Tibial artery (tissue), 4 donors: ENCODE measurements at regions of chr2 and their contacts with region 1.

Region 1: DNA sequence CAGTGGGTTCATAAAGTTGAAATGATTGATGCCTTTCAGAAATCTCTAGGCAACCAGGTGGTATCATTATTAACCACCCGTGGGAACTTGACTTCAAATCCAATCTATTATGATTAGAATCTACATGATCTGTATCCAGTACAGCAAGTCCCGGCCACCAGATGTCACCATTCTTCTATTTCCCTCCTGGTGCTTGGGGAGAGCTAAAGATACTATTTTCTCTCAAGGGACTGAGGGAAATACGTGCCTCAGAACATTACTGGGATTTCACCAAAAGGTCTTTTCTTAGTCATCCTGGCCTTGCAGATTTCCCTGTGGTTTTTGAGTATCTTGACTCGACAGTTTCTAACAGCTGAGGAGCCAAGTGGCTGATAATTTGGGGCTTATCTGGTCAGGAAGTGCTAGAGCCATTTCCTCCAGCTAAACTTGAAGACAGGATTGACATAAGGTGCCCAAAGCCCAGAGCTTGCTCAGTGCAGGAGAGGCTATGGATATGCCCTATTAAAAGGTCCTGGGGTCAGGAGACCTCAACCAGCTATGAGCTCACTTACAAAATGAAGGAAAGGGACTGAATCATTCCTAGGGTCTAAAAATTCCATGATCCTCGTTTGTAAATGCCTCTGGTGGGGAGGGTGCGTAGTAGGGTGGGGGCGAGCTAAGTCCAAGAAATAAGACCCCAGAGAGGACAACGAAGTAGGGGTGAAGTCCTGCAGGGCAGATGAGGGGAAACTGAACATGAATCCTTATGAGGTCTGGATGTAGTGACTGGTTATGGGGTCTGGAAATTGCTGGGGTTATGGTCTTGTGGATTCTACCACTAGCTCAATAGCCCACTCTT is 135.4 kb upstream of the MGAT5 start:
- DNase-seq: peak; percentile 91 to 96
- H3K4me3 ChIP-seq: no peak overlapping the region
- H3K27ac ChIP-seq: peak overlapping the region; percentile 93 to 95
- H3K4me1 ChIP-seq: peaks cover 0 to 34% (median 20%) of the 10 kb centered on the region in 4 donors
- H3K27me3 ChIP-seq: no peaks in the 10 kb centered on the region
- CTCF ChIP-seq: peak; percentile 77 to 92

Region 2: GRCh38 chr2:132776282-132776681 is 1342.2 kb before region 1 on chr2:
- intact Hi-C with region 1: no loop called
- DNase-seq: no peak
- H3K4me3 ChIP-seq: no peak overlapping the region
- H3K27ac ChIP-seq: no peak overlapping the region
- H3K4me1 ChIP-seq: no peaks in the 10 kb centered on the region
- H3K27me3 ChIP-seq: no peaks in the 10 kb centered on the region
- CTCF ChIP-seq: no peak

Region 3: DNA sequence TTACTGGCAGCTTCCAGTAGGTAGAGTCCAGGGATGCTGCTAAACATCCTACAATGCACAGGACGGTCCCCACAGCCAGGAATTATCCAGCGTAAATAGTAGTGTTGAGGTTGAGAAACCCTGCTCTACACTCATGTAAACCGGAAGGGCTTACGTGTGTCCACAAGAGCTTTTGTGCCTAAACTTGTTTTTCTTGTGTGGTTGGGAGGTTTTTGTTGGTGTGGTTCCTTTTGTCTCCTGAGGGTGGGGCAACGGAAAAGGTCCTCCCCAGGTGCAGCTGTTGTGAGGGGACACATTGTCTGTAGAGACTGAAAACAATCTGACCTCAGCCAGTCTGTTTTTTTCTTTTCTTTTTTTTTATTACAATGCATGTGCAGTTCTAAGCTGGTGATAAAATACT is 62.7 kb after region 1 on chr2:
- intact Hi-C with region 1: loop called (anchors 10 kb)
- DNase-seq: no peak
- H3K4me3 ChIP-seq: no peak overlapping the region
- H3K27ac ChIP-seq: no peak overlapping the region
- H3K4me1 ChIP-seq: peaks cover 0 to 13% (median 1%) of the 10 kb centered on the region in 4 donors
- H3K27me3 ChIP-seq: no peaks in the 10 kb centered on the region
- CTCF ChIP-seq: no peak

Region 4: DNA sequence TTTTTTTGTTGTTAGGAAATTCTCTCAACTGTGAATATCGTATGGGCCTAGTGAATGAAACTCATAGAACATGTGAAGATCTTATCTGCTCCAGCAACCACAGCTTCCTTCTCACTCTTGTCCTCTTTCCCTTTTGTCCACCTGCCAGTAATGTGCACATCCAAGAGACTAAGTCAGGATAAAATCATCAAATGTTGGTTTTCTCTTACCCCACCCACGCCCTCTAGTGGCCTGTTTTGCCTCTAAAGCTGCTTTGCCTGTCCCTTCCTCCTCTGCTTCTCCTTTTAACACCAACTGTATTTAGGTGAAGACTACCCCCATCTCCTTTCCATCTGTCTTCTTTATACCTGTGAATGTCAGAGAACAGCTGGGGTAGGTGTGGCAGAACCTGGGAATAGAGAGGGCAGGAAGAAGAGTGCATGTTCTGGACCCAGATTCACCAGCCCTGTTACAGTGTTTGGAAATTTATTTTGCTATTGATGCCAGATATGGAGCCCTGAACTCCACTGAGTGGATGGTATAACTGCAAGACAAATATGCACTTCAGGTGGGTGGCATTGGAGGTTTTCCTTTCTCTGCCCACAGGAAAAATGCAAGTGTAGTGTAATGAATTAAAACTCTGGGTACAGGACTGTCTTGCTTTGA is 127.0 kb after region 1 on chr2:
- intact Hi-C with region 1: loop called (anchors 2 kb)
- DNase-seq: peak; percentile 85 to 88
- H3K4me3 ChIP-seq: no peak overlapping the region
- H3K27ac ChIP-seq: no peak overlapping the region
- H3K4me1 ChIP-seq: peaks cover 0 to 13% (median 4%) of the 10 kb centered on the region in 4 donors
- H3K27me3 ChIP-seq: no peaks in the 10 kb centered on the region
- CTCF ChIP-seq: peak; percentile 68 to 74